WTC11 (cell line): ENCODE measurements at regions of chr4 and their contacts with region 1.

Region 1: DNA sequence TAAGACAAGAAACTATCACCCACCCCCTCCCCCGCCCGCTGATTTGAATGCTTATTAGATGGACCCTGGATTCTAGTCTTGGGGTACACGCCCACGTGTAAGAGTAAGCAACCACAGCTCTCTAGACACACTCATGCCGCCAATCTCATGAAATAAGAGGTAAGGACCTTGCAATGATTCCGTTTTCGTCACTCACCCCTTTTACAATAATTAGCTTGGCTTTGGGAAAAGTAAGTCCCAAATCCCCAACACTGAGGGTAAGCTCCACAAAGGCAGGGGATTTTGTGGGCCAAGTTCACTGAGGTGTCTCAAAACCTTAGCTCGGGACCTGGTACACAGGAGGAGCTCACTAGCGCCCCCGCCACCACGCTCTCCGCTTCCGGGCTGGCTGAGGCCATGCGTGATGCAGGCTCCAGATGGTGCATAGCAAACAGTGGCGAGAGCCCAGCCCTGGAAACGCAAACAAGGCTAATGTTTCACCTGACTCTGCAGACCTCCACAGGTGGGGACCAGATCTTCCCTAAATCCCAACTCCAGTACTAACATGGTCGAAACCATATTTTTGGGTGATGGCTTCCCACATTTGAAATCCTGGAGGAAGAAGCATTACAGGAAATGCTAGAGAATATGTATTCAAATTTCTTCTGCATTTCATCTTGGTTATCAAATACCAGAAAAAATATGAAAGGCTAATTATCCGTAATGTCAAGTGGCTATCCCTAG is 4.1 kb downstream of the PLAC8 start:
- DNase-seq: peak; percentile 92
- ATAC-seq: peak; percentile 91
- H3K4me3 Mint-ChIP-seq: peak overlapping the region; percentile 81
- H3K27ac Mint-ChIP-seq: peak overlapping the region; percentile 84
- H3K4me1 Mint-ChIP-seq: peaks cover 40% of the 10 kb centered on the region
- H3K27me3 Mint-ChIP-seq: peaks cover 16% of the 10 kb centered on the region
- CTCF ChIP-seq: peak; percentile 34; the same call in 1 of the 2 replicates

Region 2: GRCh38 chr4:83034630-83035494 is 75.5 kb before region 1 on chr4 and contains the start of gene COPS4:
- CTCF ChIA-PET with region 1: interaction called, 10 read pairs
- POLR2A ChIA-PET with region 1: interaction called, 4 read pairs
- DNase-seq: peak; percentile 95
- ATAC-seq: peak; percentile 100
- H3K4me3 Mint-ChIP-seq: peak within 1 kb of the TSS; percentile 100
- H3K27ac Mint-ChIP-seq: peak within 1 kb of the TSS; percentile 100
- H3K4me1 Mint-ChIP-seq: peaks cover 10% of the 10 kb centered on the region
- H3K27me3 Mint-ChIP-seq: peaks cover 18% of the 10 kb centered on the region
- CTCF ChIP-seq: no peak
- total RNA-seq, gene COPS4: 26.9 to 30.9 TPM (median 28.7 TPM) in 3 replicates

Region 3: DNA sequence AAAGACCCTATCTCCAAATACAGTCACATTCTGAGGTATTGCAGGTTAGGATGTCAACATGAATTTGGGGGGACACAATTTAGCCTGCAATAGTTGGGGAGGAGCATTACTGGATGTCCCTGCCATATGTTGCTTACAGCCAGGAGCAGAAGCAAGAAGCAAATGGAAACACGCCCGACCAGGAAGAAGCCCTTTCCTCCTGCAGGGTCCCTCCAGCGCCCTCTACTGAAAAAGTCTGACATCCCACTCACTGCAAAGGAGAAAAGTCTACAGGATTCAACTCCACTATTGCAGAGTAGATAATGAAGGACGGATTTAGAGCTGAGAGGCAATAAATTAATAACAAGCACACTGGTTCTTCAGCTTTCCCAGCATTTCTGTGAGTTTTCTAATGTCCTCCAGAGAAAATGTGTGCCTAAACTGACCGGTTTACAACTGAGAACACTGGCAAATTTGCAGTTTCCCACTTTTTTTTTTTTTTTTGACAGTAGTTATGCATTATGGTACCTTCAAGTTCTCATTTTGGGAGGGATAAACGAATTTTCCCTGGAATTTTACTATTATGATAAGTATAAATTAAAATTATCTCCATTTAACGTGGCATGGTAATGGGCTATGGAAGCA is 142.5 kb after region 1 on chr4:
- CTCF ChIA-PET with region 1: interaction called, 11 read pairs
- POLR2A ChIA-PET with region 1: no interaction called
- DNase-seq: peak; percentile 73
- ATAC-seq: peak; percentile 89
- H3K4me3 Mint-ChIP-seq: no peak overlapping the region
- H3K27ac Mint-ChIP-seq: no peak overlapping the region
- H3K4me1 Mint-ChIP-seq: peaks cover 7% of the 10 kb centered on the region; the same call in 1 of the 2 replicates
- H3K27me3 Mint-ChIP-seq: no peaks in the 10 kb centered on the region
- CTCF ChIP-seq: peak; percentile 66; the same call in 1 of the 2 replicates

Region 4: GRCh38 chr4:83284193-83285054 is 174.0 kb after region 1 on chr4 and contains the start of gene COQ2:
- CTCF ChIA-PET with region 1: interaction called, 11 read pairs
- POLR2A ChIA-PET with region 1: interaction called, 7 read pairs
- DNase-seq: peak; percentile 94
- ATAC-seq: peak; percentile 93
- H3K4me3 Mint-ChIP-seq: peak within 1 kb of the TSS; percentile 86
- H3K27ac Mint-ChIP-seq: peak within 1 kb of the TSS; percentile 81
- H3K4me1 Mint-ChIP-seq: peaks cover 18% of the 10 kb centered on the region
- H3K27me3 Mint-ChIP-seq: peaks cover 11% of the 10 kb centered on the region
- CTCF ChIP-seq: no peak
- total RNA-seq, gene COQ2: 20.5 to 22.8 TPM (median 21.6 TPM) in 3 replicates

Region 5: DNA sequence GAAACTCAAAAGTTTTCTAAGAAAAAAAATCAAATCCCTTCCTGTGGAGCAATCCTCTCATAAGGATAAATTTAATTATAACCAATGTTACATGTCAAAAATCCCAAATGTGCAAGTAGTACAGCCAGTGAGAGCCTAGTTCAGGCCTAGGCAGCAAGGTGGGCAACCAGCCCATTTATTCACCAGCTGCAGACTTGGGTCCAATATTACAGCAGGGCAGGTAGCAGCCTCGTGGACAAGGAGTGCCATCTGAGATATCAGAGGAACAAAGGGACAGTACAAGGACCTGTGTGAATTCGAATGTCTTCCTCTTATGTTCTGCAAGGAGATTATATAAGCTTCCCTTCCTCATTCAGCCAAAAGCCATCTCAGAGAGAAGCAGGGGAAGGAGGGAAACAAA is 338.6 kb after region 1 on chr4:
- CTCF ChIA-PET with region 1: no interaction called
- POLR2A ChIA-PET with region 1: no interaction called
- DNase-seq: no peak
- ATAC-seq: no peak
- H3K4me3 Mint-ChIP-seq: no peak overlapping the region
- H3K27ac Mint-ChIP-seq: no peak overlapping the region; the same call in 1 of the 2 replicates
- H3K4me1 Mint-ChIP-seq: no peaks in the 10 kb centered on the region
- H3K27me3 Mint-ChIP-seq: no peaks in the 10 kb centered on the region
- CTCF ChIP-seq: no peak